ENCODE measurements at regions of chr20 and their contacts with region 1.

Region 1: GRCh38 chr20:51306503-51307358 is 235.8 kb downstream of the NFATC2 start:
- DNase-seq: no peak
- H3K4me3 ChIP-seq: no peak overlapping the region
- CTCF ChIP-seq: peak; percentile 98

Region 2: GRCh38 chr20:50992733-50993457 is 313.8 kb before region 1 on chr20:
- CTCF ChIA-PET with region 1: interaction called, 626 read pairs
- POLR2A ChIA-PET with region 1: no interaction called
- DNase-seq: no peak
- H3K4me3 ChIP-seq: no peak overlapping the region
- CTCF ChIP-seq: peak; percentile 57

Region 3: GRCh38 chr20:51022803-51023630 is 283.7 kb before region 1 on chr20 and contains the start of gene KCNG1:
- CTCF ChIA-PET with region 1: interaction called, 66 read pairs
- POLR2A ChIA-PET with region 1: no interaction called
- DNase-seq: no peak
- H3K4me3 ChIP-seq: peak within 1 kb of the TSS; percentile 70
- CTCF ChIP-seq: no peak

Region 4: DNA sequence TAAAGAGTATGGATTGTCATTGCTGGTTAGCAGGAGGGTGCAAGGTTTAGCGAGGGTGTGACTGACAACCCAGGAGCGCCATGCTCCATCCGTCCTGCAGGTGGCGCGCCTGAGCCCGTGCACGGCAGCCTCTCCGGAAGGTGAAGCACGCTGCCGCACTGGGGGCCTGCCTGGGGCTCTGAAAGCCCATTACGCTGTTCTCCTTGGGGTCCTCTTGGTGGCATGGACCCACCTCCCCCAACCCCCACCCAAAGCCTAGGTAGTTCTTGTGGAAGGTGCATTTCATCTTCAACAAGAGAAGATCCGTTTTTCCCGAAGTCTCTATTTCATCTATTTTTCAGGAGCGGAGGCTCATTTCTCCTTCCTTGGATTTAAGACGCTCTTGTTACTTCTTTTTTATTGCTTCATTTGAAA is 86.4 kb before region 1 on chr20:
- CTCF ChIA-PET with region 1: interaction called, 39 read pairs
- POLR2A ChIA-PET with region 1: no interaction called
- DNase-seq: no peak
- H3K4me3 ChIP-seq: no peak overlapping the region
- CTCF ChIP-seq: peak; percentile 94

Region 5: DNA sequence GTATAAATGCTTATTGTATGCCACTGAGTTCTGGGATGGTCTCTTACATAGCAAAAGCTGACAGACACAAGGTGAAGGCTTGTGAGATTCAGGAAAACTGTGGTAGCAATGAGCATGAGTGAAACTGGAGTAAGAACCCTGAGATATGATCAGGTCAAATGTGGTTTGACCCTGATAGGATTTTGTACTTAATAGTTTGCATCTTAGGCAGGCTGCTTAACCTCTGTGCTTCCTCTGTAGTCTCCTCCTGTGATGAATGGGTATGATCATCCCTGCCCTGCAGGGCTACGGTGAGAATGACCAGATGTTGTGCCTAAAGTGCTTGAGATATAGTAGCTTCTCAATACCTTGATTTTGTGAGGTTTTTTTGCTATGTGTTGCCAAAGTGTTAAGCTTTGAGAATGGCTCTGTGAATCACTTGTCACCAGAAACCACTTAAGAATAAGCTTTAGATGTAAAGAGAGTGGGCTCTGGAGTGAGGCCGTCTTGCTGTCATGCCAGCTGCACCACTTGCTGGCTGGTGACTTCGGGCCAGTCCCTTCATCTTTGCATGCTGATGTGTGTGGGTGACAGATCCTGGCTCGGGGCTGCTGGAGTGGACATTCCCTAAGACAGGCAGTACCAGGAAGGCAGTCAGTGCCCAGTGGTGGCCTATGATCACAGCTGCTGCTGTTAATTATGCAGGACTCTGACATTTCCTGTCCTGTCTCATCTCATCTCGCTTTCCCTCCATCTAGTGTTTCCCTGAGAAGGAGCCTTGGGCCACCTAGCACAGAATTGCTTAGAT is 18.9 kb before region 1 on chr20:
- CTCF ChIA-PET with region 1: interaction called, 63 read pairs
- POLR2A ChIA-PET with region 1: no interaction called
- DNase-seq: no peak
- H3K4me3 ChIP-seq: no peak overlapping the region
- CTCF ChIP-seq: no peak

Region 6: GRCh38 chr20:51335329-51335841 is 28.7 kb after region 1 on chr20:
- CTCF ChIA-PET with region 1: interaction called, 12 read pairs
- POLR2A ChIA-PET with region 1: no interaction called
- DNase-seq: peak; percentile 100
- H3K4me3 ChIP-seq: no peak overlapping the region
- CTCF ChIP-seq: peak; percentile 19

Measured in AG04449 (cell line).